Stomach (tissue), 19 donors: ENCODE measurements at regions of chr12 and their contacts with region 1.

Region 1: DNA sequence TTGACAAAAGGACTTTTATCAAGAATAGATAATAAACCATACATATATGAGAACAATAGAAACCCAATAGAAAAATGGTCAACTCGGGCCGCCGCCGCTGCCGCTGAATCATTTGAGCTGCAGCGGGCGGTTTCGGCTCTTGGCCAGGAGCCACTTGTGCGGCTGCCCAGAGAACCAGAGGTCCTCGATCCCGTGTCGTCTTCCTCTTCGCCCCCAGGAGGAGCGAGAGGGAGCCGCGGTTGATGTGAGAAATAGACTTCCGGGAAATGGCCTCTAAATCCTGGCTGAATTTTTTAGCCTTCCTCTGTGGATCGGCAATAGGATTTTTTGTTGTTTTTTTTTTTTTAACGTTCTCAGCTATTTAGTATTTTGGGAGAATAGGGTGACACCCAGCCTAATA is 44.8 kb downstream of the CPSF6 start:
- DNase-seq: peak; percentile 70 to 88
- H3K4me3 ChIP-seq: peak overlapping the region; percentile 26 to 37 (median 29)
- H3K27ac ChIP-seq: no peak overlapping the region
- H3K4me1 ChIP-seq: peaks cover 0 to 17% (median 12%) of the 10 kb centered on the region in 4 donors
- H3K27me3 ChIP-seq: peaks cover 0 to 9% (median 3%) of the 10 kb centered on the region in 3 donors
- CTCF ChIP-seq: no peak
- EP300 ChIP-seq: no peak
- POLR2A ChIP-seq: no peak

Region 2: DNA sequence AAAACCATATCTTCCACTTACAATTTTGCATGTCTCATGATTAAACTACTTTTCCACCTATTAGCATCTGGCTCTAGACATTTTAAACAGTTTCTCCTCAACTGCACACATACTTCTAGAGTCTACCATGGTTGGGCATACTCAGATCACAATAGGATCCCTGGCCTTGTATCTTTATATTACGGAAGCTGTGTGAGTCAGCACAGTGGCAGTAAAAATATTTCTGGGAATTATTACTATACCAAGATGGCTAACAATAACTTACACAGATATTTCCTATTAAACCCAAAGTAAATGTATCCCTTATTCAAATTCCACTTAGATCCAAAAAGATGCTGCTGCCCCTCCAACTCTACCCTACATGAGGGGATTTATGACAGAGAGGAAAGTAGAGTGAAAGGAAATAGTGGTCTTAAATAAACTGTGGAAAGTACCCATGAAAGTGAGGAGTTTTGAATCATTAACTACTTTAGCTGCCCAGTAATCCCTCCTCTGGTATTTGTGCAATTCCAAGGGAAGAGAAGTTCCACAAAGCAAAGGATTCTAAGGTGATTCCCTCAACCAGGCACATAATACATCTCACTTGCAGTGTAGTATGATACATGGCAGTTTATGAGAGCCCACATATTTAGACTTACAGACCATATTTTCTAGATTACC is 58.8 kb before region 1 on chr12:
- intact Hi-C with region 1: no loop called
- DNase-seq: no peak
- H3K4me3 ChIP-seq: no peak overlapping the region
- H3K27ac ChIP-seq: no peak overlapping the region
- H3K4me1 ChIP-seq: no peaks in the 10 kb centered on the region
- H3K27me3 ChIP-seq: no peaks in the 10 kb centered on the region
- CTCF ChIP-seq: no peak
- EP300 ChIP-seq: no peak
- POLR2A ChIP-seq: no peak

Region 3: DNA sequence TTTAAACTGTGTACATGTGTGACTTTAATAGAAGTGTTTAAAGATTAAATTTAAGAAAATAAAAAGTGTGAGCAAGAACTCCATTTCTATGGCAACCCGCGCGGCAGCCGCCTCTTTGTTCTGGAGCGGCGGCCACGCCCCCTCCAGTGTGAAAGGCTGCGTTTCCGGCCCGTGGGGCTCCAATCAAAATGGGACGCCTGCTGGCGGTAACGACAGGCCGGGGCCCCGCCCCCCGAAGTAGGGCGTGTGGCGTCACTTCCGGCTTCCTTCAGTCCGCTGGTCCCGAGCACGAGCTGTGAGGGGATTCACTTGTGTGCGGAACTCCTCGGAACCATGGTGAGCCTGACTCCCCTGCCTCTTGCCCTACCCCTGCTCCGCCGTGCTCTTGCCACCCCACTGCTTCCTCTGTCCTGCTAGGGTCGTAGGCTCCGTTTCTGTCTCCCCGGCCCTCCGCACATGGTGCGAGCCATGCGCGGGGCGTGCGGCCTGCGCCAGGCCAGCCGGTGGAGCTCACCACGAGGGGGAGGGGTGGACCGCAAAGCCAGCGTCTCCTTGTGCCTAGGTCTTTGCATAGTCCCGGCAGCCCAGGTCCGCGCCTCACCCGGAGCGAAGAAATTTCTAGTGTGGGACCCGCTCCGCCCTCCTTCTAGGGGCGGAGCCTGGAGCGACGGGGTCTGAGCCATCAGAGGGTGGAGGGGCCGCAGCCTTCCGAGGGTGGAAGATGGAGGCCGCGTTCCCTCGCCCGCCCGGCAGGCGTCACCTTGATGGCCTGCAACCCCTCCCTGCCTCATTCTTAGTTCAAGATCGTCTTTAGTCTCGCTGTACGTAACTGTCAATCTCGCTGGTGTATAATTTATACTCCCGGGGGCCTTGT is 301.3 kb after region 1 on chr12 and contains the start of gene CCT2:
- intact Hi-C with region 1: loop called (anchors 10 kb)
- DNase-seq: peak; percentile 98 to 99
- H3K4me3 ChIP-seq: peak within 1 kb of the TSS; percentile 84 to 100 (median 92)
- H3K27ac ChIP-seq: peak within 1 kb of the TSS; percentile 80 to 94 (median 89)
- H3K4me1 ChIP-seq: peaks cover 6 to 21% (median 11%) of the 10 kb centered on the region in 4 donors
- H3K27me3 ChIP-seq: no peaks in the 10 kb centered on the region
- CTCF ChIP-seq: peak in 2 of 7 experiments; percentile 6 to 16
- EP300 ChIP-seq: no peak
- POLR2A ChIP-seq: no peak
- total RNA-seq, gene CCT2: 43.3 to 137 (median 53.7) TPM